ENCODE measurements at regions of chr1 and their contacts with region 1.

Region 1: GRCh38 chr1:174990382-174990999 is 9.3 kb upstream of the CACYBP start:
- DNase-seq: no peak
- H3K4me3 ChIP-seq: no peak overlapping the region; the same call in 1 of the 2 replicates
- CTCF ChIP-seq: no peak

Region 2: DNA sequence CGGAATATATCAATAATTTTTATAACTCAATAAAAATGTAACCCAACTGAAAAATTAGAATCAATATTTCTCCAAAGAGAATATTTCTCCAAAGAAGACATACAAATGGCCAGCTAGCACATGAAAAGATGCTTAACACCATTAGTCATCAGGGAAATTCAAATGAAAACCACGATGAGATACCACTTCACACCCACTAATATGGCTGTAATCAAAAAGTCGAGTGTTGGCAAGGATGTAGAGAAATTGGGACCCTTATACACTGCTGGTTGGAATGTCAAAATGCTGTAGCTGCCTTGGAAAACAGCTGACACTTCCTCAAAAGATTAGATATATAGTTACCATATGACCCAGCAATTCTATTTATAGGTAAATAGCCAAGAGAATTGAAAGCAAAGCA is 409.7 kb before region 1 on chr1:
- CTCF ChIA-PET with region 1: no interaction called
- POLR2A ChIA-PET with region 1: no interaction called
- DNase-seq: no peak
- H3K4me3 ChIP-seq: no peak overlapping the region
- CTCF ChIP-seq: no peak

Region 3: GRCh38 chr1:174769961-174770549 is 220.4 kb before region 1 on chr1:
- CTCF ChIA-PET with region 1: interaction called, 85 read pairs
- POLR2A ChIA-PET with region 1: no interaction called
- DNase-seq: no peak
- H3K4me3 ChIP-seq: no peak overlapping the region
- CTCF ChIP-seq: peak; percentile 61

Measured in AG04449 (cell line).